Naive thymus-derived CD8-positive, alpha-beta T cell (primary cell): ENCODE measurements at regions of chr5 and their contacts with region 1.

Region 1: GRCh38 chr5:40798012-40798855 is at the start of gene PRKAA1:
- DNase-seq: peak; percentile 85 to 94 (median 92)
- ATAC-seq: peak; percentile 92
- H3K4me3 Mint-ChIP-seq: peak within 1 kb of the TSS; percentile 86 to 96 (median 94)
- H3K27ac Mint-ChIP-seq: peak within 1 kb of the TSS; percentile 86 to 97 (median 96)
- H3K4me1 Mint-ChIP-seq: peaks cover 15 to 52% (median 43%) of the 10 kb centered on the region in 4 donors
- H3K27me3 Mint-ChIP-seq: no peaks in the 10 kb centered on the region
- polyA plus RNA-seq, gene PRKAA1: 33.8 to 36.8 (median 34.6) TPM

Region 2: GRCh38 chr5:40823459-40823858 is 25.2 kb after region 1 on chr5:
- POLR2A ChIA-PET with region 1: no interaction called
- DNase-seq: no peak
- ATAC-seq: no peak
- H3K4me3 Mint-ChIP-seq: no peak overlapping the region
- H3K27ac Mint-ChIP-seq: peak overlapping the region in 3 of 10 donors; percentile 33 to 60 (median 49)
- H3K4me1 Mint-ChIP-seq: peaks cover under 1 to 13% (median 4%) of the 10 kb centered on the region in 4 donors
- H3K27me3 Mint-ChIP-seq: no peaks in the 10 kb centered on the region

Region 3: DNA sequence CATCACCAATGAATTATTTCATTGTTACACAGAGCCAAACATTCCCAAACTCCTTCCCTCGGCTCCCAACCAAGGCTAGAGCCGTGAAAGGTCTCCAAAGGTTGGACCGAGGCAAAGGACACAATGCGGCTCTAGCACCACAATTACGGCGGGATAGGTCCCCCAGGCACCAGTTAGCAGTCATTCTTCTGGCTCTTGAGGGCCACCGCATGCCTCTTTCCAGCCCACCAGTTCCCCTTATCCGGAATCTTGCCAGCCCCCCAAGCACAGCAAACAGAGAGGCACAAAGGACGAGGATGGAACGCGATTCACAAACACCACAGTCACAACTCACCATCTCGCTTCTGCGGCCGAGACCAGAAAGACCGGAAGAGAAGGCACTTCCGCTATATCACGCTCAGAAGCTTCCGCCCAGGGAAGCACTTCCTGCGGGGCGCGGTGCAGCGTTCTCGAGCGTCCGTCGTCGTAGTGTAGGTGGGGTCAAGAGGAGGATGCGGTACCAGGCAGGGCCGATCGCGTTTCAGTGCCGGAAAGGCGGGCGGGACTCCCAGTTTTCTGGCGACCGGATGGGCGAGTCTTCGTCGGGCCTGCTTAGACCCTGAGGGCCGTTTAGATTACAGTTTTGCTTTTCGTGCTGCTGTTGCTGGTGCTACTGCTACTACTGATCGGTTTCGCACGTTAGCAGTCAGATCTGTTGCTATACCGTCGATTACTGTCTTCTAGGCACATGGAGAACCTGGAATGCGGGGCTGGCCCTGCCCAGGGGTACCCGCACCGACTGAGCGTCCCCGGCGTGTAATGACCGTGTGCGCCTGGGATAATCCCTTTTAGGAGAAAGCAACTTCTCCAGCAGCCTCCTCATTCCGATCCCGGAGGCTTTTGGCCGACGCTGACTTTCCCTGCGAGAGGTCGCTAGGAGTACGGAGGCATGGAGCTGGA is 36.9 kb after region 1 on chr5 and contains the start of gene RPL37:
- POLR2A ChIA-PET with region 1: interaction called, 21 read pairs
- DNase-seq: peak; percentile 75 to 95 (median 88)
- ATAC-seq: peak; percentile 85 to 94
- H3K4me3 Mint-ChIP-seq: peak within 1 kb of the TSS; percentile 85 to 99 (median 96)
- H3K27ac Mint-ChIP-seq: peak within 1 kb of the TSS; percentile 94 to 100 (median 99)
- H3K4me1 Mint-ChIP-seq: peaks cover 11 to 49% (median 40%) of the 10 kb centered on the region in 4 donors
- H3K27me3 Mint-ChIP-seq: no peaks in the 10 kb centered on the region
- polyA plus RNA-seq, gene RPL37: 2,504 to 3,082 (median 2,628) TPM

Region 4: GRCh38 chr5:41151562-41151961 is 353.3 kb after region 1 on chr5:
- POLR2A ChIA-PET with region 1: no interaction called
- DNase-seq: no peak
- ATAC-seq: no peak
- H3K4me3 Mint-ChIP-seq: no peak overlapping the region
- H3K27ac Mint-ChIP-seq: no peak overlapping the region
- H3K4me1 Mint-ChIP-seq: no peaks in the 10 kb centered on the region
- H3K27me3 Mint-ChIP-seq: peaks cover 0 to 8% (median 3%) of the 10 kb centered on the region in 5 donors